ENCODE measurements at regions of chr17 and their contacts with region 1.

Region 1: DNA sequence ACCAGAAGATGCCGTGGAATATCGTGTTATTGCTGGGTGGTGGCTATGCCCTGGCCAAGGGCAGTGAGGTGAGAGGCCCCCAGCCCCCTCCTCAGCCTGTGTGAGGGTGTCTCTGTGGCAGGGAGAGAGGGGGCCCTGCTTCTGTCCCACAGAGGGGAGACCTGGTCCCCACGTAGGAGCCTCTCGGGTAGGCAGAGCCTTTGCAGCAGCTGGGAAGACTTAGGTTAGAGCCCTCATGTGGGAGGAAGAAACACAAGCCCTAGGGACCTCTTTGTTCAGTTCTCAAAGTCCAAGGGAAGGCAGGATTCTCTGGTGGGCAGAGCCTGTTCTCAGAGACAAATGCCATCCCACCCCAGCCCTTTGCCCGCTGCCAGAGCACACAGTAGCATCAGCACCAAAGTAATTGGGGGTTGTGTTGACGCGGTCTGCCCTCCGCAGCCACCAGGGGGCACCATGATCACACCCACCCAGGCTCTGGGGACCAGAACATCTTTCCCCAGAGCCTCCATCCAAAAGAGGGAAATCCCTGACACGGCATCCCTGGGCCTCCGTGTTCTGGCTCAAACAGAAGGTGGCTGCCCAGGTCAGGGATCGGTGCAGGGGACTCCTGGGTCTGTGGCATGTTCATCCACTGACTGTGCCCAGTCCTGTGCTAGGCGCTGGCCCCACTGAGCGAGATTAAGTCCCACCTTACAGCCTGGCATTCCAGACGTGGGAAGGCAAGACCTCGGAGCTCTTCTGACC is 11.5 kb upstream of the FOXN1 start:
- DNase-seq: peak; percentile 71
- H3K4me3 Mint-ChIP-seq: no peak overlapping the region
- H3K27ac Mint-ChIP-seq: no peak overlapping the region
- H3K4me1 Mint-ChIP-seq: peaks cover 8% of the 10 kb centered on the region
- H3K27me3 Mint-ChIP-seq: no peaks in the 10 kb centered on the region
- CTCF ChIP-seq: peak; percentile 88

Region 2: DNA sequence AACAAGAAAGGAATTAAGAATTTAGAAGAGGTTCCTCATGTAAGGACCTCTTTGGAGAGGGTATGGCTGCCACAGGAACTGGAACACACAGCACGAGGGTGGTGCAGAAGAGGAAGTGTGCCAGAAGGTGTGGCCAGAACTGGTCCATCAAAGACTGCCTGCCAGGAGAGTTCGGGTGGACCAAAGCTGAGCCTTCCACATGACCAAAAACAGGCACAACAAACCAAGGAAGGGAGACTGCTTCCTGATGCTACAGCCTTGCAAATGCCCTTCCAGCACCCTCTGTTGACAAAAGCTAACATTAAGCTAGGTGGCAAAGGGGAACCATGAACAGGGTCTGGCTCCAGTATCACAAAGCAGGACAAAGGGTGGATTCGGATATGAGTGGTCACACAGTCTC is 301.4 kb before region 1 on chr17:
- CTCF ChIA-PET with region 1: no interaction called
- POLR2A ChIA-PET with region 1: no interaction called
- intact Hi-C with region 1: no loop called
- DNase-seq: no peak
- H3K4me3 Mint-ChIP-seq: no peak overlapping the region
- H3K27ac Mint-ChIP-seq: peak overlapping the region; percentile 78
- H3K4me1 Mint-ChIP-seq: no peaks in the 10 kb centered on the region
- H3K27me3 Mint-ChIP-seq: no peaks in the 10 kb centered on the region
- CTCF ChIP-seq: no peak

Region 3: DNA sequence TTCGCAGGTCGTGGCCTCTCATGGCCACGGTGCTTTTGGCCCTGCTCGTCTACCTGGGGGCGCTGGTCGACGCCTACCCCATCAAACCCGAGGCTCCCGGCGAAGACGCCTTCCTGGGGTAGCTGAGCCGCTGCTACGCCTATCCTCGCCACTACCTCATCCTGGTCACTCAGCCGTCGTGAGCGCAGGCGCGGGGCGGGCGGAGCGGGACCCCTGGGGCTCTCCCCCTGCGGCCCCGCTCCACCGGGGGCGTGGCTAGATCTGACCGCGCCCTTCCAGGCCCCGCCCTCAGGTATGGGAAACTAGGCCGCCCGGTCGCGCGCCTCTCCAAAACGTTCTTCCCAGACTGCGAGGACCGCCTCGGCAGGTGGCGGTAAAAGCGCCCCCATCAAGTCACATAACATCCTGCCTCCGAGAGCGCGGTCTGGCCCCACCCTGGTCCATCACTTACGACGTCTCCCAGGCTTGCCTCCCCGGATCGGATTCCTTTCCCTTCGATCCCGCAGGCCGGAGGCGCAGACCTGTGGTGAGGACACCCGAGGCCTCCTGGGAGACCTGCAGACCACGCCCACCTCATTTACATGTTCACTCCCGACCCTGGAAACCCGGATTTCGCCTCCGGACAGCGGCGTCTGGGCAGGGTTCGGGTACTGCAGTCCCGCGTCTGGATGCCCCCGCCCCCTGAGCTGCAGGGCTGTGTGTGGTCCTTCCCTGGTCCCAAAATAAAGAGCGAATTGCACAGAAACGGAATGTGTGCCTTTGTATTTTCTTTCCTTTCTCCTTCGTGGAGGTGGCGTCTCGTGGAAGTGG is 267.1 kb before region 1 on chr17:
- CTCF ChIA-PET with region 1: interaction called, 3 read pairs
- POLR2A ChIA-PET with region 1: no interaction called
- intact Hi-C with region 1: loop called (anchors 5 kb)
- DNase-seq: peak; percentile 83
- H3K4me3 Mint-ChIP-seq: peak overlapping the region; percentile 88
- H3K27ac Mint-ChIP-seq: peak overlapping the region; percentile 94
- H3K4me1 Mint-ChIP-seq: peaks cover 5% of the 10 kb centered on the region
- H3K27me3 Mint-ChIP-seq: no peaks in the 10 kb centered on the region
- CTCF ChIP-seq: no peak

Region 4: GRCh38 chr17:28357061-28357900 is 137.3 kb before region 1 on chr17 and contains the start of gene POLDIP2:
- CTCF ChIA-PET with region 1: interaction called, 5 read pairs
- POLR2A ChIA-PET with region 1: interaction called, 23 read pairs
- intact Hi-C with region 1: no loop called
- DNase-seq: peak; percentile 92
- H3K4me3 Mint-ChIP-seq: peak within 1 kb of the TSS; percentile 88
- H3K27ac Mint-ChIP-seq: peak within 1 kb of the TSS; percentile 84
- H3K4me1 Mint-ChIP-seq: peaks cover 13% of the 10 kb centered on the region
- H3K27me3 Mint-ChIP-seq: no peaks in the 10 kb centered on the region
- CTCF ChIP-seq: no peak
- total RNA-seq, gene POLDIP2: 84.0 and 105 TPM in 2 replicates

Region 5: DNA sequence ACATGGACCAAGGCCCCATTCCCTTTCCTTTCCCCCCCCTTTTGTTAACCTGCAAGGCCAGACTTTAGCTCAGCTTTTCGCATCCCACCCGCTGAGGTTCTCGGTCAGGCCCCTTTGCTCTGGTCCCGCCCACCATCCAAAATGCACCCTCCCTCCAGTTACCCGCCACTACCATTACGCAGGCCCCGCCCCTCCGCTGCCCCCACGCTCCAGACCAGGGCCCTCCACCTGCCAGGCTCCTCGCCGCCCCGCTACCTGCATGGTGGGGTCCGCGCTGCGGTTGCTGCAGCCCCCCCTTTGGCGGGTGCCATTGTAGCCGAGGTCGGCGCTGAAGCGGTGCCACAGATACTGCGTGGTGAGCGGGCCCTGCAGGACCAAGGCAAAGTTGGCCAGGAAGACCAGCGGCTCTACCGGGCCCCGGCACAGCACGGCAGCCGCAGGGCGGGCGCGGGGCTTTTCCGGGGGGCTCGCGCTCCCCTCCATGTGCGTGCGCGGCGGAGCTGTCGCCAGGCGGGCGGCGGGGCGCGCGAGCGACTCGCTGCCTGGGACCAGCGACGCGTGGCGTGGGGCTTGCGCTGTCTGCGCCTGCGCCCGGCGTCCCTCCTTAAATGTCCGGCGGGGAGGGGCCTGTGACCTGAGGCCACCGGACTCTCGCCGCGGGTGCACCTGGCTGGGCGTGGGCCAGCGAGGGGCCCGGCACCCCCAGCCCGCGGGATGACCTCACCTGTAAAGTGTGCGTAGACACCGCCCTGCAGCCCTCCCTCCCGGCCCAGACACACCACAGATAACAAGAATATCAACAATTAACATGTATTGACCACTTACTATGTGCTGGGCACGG is 88.8 kb before region 1 on chr17 and contains the start of gene SLC46A1:
- CTCF ChIA-PET with region 1: interaction called, 7 read pairs
- POLR2A ChIA-PET with region 1: interaction called, 14 read pairs
- intact Hi-C with region 1: no loop called
- DNase-seq: peak; percentile 44
- H3K4me3 Mint-ChIP-seq: peak within 1 kb of the TSS; percentile 86
- H3K27ac Mint-ChIP-seq: no peak within 1 kb of the TSS
- H3K4me1 Mint-ChIP-seq: peaks cover 23% of the 10 kb centered on the region
- H3K27me3 Mint-ChIP-seq: no peaks in the 10 kb centered on the region
- CTCF ChIP-seq: no peak
- total RNA-seq, gene SLC46A1: 18.4 and 20.1 TPM in 2 replicates

Region 6: DNA sequence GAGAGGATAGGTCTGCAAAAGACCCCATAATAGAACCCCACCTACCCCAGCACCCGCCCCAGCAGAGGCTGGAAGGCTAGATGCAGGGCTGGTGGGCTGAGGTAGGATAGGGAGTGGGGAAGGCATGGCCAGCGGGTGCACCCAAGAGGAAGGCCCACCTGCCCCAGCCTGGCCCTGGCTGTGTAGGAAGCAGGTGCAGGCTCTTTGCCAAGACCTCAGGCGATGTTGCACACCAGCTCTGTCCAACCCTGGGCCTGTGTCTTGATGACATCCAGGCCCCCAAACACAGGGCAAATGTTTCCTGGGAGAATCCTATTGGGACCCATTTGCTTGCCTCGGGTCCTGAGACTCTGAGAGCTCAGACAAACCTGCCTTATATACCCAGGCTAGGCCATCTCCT is 45.6 kb after region 1 on chr17:
- CTCF ChIA-PET with region 1: interaction called, 98 read pairs
- POLR2A ChIA-PET with region 1: interaction called, 4 read pairs
- intact Hi-C with region 1: loop called (anchors 1 kb)
- DNase-seq: no peak
- H3K4me3 Mint-ChIP-seq: no peak overlapping the region
- H3K27ac Mint-ChIP-seq: no peak overlapping the region
- H3K4me1 Mint-ChIP-seq: peaks cover 5% of the 10 kb centered on the region
- H3K27me3 Mint-ChIP-seq: peaks cover 12% of the 10 kb centered on the region
- CTCF ChIP-seq: no peak

Region 7: DNA sequence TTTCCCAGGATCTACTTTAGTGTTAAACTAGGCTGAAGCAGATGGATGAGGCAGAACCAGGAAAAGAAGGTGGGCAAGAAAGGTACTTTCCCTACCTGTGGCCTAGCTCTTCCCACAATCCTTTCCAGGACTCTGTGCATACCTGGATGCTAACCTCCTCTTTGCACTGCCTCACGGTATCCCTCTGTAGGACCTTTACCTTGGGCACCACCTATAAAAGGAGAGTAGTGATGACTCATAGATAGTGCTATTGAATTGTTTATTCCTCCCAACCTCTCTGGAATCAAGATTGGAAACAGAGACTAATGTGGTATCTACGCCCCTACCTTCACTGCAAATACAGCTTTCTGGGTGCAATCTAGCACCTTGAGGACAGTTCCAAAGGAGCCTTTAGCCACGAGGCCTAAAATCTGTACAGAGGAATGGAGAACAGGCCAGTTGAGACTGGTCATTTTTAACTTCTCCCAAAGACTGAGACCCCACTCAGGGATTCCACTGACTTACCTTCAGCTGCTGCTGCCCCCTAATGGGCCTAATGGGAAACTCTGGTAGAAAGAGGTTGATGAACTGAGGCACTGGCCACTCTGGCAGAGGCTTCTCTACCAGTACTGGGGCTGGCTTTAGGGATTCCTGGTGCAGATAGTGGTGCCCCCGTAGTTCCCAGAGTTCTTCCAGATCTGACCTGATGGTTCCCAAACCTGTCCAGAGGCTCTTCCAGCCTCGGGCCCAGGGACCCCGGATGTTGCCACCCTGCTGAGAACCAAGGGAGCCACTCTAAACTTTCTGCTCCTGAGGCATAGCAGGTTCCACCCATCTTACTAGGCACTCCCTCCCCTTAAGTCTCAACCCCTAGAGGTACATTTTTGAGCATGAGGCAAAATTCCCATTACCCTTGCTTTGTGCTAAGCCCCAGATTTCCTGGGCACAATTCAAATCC is 118.6 kb after region 1 on chr17:
- CTCF ChIA-PET with region 1: no interaction called
- POLR2A ChIA-PET with region 1: no interaction called
- intact Hi-C with region 1: loop called (anchors 1 kb)
- DNase-seq: peak; percentile 42
- H3K4me3 Mint-ChIP-seq: no peak overlapping the region
- H3K27ac Mint-ChIP-seq: no peak overlapping the region
- H3K4me1 Mint-ChIP-seq: no peaks in the 10 kb centered on the region
- H3K27me3 Mint-ChIP-seq: no peaks in the 10 kb centered on the region
- CTCF ChIP-seq: peak; percentile 45